PC-9 (cell line): ENCODE measurements at regions of chr11 and their contacts with region 1.

Region 1: GRCh38 chr11:65615229-65615941 is at the start of gene PCNX3:
- DNase-seq: peak; percentile 100
- H3K4me3 ChIP-seq: peak within 1 kb of the TSS; percentile 93
- H3K27ac ChIP-seq: peak within 1 kb of the TSS; percentile 64
- H3K4me1 ChIP-seq: peaks cover 27% of the 10 kb centered on the region; the same call in 1 of the 2 replicates
- H3K27me3 ChIP-seq: no peaks in the 10 kb centered on the region
- CTCF ChIP-seq: no peak
- total RNA-seq, gene PCNX3: 76.9 and 85.9 TPM in 2 replicates

Region 2: GRCh38 chr11:64500176-64501013 is 1115.0 kb before region 1 on chr11:
- CTCF ChIA-PET with region 1: no interaction called
- POLR2A ChIA-PET with region 1: no interaction called
- intact Hi-C with region 1: no loop called
- DNase-seq: no peak
- H3K4me3 ChIP-seq: no peak overlapping the region
- H3K27ac ChIP-seq: no peak overlapping the region
- H3K4me1 ChIP-seq: no peaks in the 10 kb centered on the region
- H3K27me3 ChIP-seq: peaks cover 91% of the 10 kb centered on the region
- CTCF ChIP-seq: no peak

Region 3: GRCh38 chr11:65575568-65576231 is 39.7 kb before region 1 on chr11 and contains the start of gene EHBP1L1:
- CTCF ChIA-PET with region 1: interaction called, 4 read pairs
- POLR2A ChIA-PET with region 1: interaction called, 15 read pairs
- intact Hi-C with region 1: loop called (anchors 1 kb)
- DNase-seq: peak in 1 of 2 experiments; percentile 80
- H3K4me3 ChIP-seq: peak within 1 kb of the TSS; percentile 81
- H3K27ac ChIP-seq: peak within 1 kb of the TSS; percentile 52
- H3K4me1 ChIP-seq: peaks cover 55% of the 10 kb centered on the region
- H3K27me3 ChIP-seq: no peaks in the 10 kb centered on the region
- CTCF ChIP-seq: no peak
- total RNA-seq, gene EHBP1L1: 123 and 170 TPM in 2 replicates

Region 4: GRCh38 chr11:65652511-65653231 is 37.3 kb after region 1 on chr11:
- CTCF ChIA-PET with region 1: no interaction called
- POLR2A ChIA-PET with region 1: no interaction called
- intact Hi-C with region 1: loop called (anchors 5 kb)
- DNase-seq: peak; percentile 82 to 98
- H3K4me3 ChIP-seq: peak overlapping the region; percentile 64
- H3K27ac ChIP-seq: peak overlapping the region; percentile 76
- H3K4me1 ChIP-seq: peaks cover 35% of the 10 kb centered on the region
- H3K27me3 ChIP-seq: no peaks in the 10 kb centered on the region
- CTCF ChIP-seq: no peak

Region 5: GRCh38 chr11:65773784-65774411 is 158.5 kb after region 1 on chr11:
- CTCF ChIA-PET with region 1: no interaction called
- POLR2A ChIA-PET with region 1: interaction called, 30 read pairs
- intact Hi-C with region 1: no loop called
- DNase-seq: no peak
- H3K4me3 ChIP-seq: no peak overlapping the region
- H3K27ac ChIP-seq: no peak overlapping the region
- H3K4me1 ChIP-seq: peaks cover 32% of the 10 kb centered on the region
- H3K27me3 ChIP-seq: no peaks in the 10 kb centered on the region
- CTCF ChIP-seq: no peak

Region 6: DNA sequence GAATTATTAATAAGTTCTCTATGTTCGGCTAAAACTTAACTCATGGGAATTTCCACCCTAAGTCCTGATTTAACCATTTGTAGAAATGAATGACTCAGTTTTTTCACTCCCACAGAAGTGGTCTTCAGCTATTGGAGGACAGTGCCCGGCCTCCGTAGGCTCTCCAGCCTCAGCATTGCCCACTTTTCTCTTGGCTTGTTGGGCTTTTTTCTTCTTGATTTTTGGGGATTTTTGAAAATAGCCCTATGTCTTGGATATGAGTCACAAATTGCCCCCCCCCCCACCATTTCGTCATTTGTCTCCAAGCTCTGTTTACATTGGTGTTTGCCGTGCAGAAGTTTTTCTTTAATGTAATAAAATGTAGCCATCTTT is 521.4 kb after region 1 on chr11:
- CTCF ChIA-PET with region 1: no interaction called
- POLR2A ChIA-PET with region 1: interaction called, 14 read pairs
- intact Hi-C with region 1: no loop called
- DNase-seq: no peak
- H3K4me3 ChIP-seq: no peak overlapping the region
- H3K27ac ChIP-seq: no peak overlapping the region
- H3K4me1 ChIP-seq: peaks cover 19% of the 10 kb centered on the region
- H3K27me3 ChIP-seq: no peaks in the 10 kb centered on the region
- CTCF ChIP-seq: no peak